CD8-positive, alpha-beta T cell (primary cell): ENCODE measurements at regions of chr5 and their contacts with region 1.

Region 1: DNA sequence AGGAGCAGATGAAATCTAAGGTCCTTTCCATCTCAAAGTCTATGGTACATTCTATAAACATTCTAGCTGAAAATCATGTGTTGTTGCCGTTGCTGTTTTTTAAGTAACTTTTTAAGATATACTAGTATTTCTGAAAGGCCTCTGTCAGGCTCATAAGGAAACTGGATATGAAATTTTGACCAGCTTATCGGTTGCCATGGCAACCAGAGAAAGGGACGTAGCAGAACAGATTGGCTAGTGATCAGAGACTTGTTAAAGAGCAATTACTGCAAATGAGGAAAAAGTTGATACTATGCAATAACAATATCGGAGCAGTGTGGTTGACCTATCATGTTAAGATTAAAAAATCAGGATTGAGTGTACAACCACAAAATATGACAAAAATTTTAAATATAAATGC is 57.0 kb upstream of the RNF180 start:
- DNase-seq: no peak
- ATAC-seq: no peak
- H3K4me3 ChIP-seq: no peak overlapping the region
- H3K4me3 Mint-ChIP-seq: no peak overlapping the region
- H3K27ac ChIP-seq: no peak overlapping the region
- H3K27ac Mint-ChIP-seq: no peak overlapping the region
- H3K4me1 ChIP-seq: no peaks in the 10 kb centered on the region
- H3K4me1 Mint-ChIP-seq: no peaks in the 10 kb centered on the region
- H3K27me3 ChIP-seq: no peaks in the 10 kb centered on the region
- H3K27me3 Mint-ChIP-seq: no peaks in the 10 kb centered on the region
- CTCF ChIP-seq: no peak

Region 2: DNA sequence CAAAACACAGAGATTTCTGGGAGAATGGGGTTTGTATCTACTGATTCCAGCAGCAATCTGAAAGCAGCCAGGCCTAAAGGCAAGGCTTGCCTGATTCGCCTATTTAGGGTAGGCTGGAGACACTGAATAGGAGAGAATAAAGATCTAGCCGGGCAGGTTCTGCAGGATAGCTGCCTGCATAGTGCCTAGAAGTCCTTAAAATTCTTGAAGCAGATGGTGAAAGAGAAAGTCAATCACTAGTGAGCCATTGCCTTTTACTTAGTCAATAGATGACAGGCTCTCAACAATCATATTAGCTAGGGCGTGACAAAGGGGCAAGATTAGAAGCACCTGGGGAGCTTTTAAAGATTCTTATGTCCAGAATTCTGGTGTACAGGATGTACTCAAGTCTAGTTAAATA is 669.1 kb before region 1 on chr5:
- CTCF ChIA-PET with region 1: no interaction called
- POLR2A ChIA-PET with region 1: no interaction called
- intact Hi-C with region 1: loop called in 1 of 2 experiments (anchors 5 kb)
- DNase-seq: no peak
- ATAC-seq: no peak
- H3K4me3 ChIP-seq: no peak overlapping the region
- H3K4me3 Mint-ChIP-seq: no peak overlapping the region
- H3K27ac ChIP-seq: no peak overlapping the region
- H3K27ac Mint-ChIP-seq: no peak overlapping the region
- H3K4me1 ChIP-seq: no peaks in the 10 kb centered on the region
- H3K4me1 Mint-ChIP-seq: no peaks in the 10 kb centered on the region
- H3K27me3 ChIP-seq: no peaks in the 10 kb centered on the region
- H3K27me3 Mint-ChIP-seq: no peaks in the 10 kb centered on the region
- CTCF ChIP-seq: no peak

Region 3: DNA sequence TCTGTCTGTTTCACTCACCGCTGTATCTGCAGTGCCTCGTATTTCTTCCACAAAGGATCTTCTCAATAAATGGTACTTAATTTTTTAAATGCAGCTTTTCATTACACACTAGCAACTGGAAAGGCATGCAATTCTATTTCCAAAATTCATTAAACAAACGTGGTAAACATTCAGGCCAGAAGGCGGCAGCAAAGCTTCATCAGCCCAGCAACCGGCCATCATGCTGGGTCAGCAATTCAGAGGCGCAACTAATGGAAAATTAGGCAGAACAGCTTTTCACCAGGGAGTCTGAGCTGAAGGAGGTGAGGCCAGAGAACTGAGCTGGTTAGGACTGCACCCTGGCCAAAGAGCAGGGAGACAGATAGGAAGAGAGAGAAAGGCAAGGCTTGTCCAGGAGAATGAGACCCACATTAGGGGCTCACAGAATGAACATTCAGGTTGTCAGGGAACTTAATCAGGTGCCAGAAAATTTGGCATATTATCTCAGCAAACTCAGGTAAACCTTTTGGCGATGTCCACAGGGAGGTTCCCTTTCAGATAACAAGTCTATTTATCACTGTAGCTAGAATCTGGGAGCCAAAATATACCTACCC is 39.3 kb after region 1 on chr5:
- CTCF ChIA-PET with region 1: no interaction called
- POLR2A ChIA-PET with region 1: no interaction called
- intact Hi-C with region 1: no loop called
- DNase-seq: no peak
- ATAC-seq: no peak
- H3K4me3 ChIP-seq: no peak overlapping the region
- H3K4me3 Mint-ChIP-seq: no peak overlapping the region
- H3K27ac ChIP-seq: no peak overlapping the region
- H3K27ac Mint-ChIP-seq: no peak overlapping the region
- H3K4me1 ChIP-seq: no peaks in the 10 kb centered on the region
- H3K4me1 Mint-ChIP-seq: no peaks in the 10 kb centered on the region
- H3K27me3 ChIP-seq: no peaks in the 10 kb centered on the region
- H3K27me3 Mint-ChIP-seq: no peaks in the 10 kb centered on the region
- CTCF ChIP-seq: no peak

Region 4: DNA sequence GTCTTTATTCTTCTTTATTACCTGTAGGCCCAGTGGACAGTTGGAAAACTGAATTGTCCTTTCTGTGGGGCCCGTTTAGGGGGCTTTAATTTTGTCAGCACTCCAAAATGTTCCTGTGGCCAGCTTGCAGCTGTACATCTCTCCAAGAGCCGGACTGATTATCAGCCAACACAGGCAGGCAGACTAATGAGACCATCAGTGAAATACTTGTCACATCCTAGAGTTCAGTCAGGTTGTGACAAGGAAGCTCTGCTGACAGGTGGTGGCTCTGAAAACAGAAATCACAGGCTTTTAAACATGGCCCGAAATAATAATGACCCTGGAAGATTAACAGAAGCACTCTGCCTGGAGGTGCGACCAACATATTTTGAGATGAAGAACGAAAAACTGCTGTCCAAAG is 104.9 kb after region 1 on chr5:
- CTCF ChIA-PET with region 1: no interaction called
- POLR2A ChIA-PET with region 1: no interaction called
- intact Hi-C with region 1: no loop called
- DNase-seq: no peak
- ATAC-seq: no peak
- H3K4me3 ChIP-seq: no peak overlapping the region
- H3K4me3 Mint-ChIP-seq: no peak overlapping the region
- H3K27ac ChIP-seq: no peak overlapping the region
- H3K27ac Mint-ChIP-seq: no peak overlapping the region
- H3K4me1 ChIP-seq: no peaks in the 10 kb centered on the region
- H3K4me1 Mint-ChIP-seq: no peaks in the 10 kb centered on the region
- H3K27me3 ChIP-seq: no peaks in the 10 kb centered on the region
- H3K27me3 Mint-ChIP-seq: no peaks in the 10 kb centered on the region
- CTCF ChIP-seq: no peak